ENCODE measurements at regions of chr17 and their contacts with region 1.

Region 1: DNA sequence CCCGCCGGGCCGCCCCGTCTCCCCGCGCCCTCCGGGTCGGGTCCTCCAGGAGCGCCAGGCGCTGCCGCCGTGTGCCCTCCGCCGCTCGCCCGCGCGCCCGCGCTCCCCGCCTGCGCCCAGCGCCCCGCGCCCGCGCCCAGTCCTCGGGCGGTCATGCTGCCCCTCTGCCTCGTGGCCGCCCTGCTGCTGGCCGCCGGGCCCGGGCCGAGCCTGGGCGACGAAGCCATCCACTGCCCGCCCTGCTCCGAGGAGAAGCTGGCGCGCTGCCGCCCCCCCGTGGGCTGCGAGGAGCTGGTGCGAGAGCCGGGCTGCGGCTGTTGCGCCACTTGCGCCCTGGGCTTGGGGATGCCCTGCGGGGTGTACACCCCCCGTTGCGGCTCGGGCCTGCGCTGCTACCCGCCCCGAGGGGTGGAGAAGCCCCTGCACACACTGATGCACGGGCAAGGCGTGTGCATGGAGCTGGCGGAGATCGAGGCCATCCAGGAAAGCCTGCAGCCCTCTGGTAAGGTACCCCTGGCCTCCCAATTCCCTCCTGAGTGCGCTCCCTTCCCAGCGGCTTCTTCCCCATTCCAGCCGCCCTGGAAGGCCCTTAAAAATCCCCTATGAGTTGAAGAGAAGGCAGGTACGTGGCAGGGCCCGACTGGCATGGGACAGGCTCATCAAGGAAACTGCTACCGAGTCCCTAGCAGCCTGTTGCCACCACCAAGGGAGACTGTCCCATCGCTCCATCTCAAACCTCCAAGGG is 505 bp downstream of the IGFBP4 start:
- DNase-seq: no peak
- H3K4me3 ChIP-seq: peak overlapping the region; percentile 59 to 90 (median 73)
- H3K27ac ChIP-seq: peak overlapping the region; percentile 89 to 99 (median 96)
- H3K4me1 ChIP-seq: peaks cover 36 to 73% (median 43%) of the 10 kb centered on the region in 3 donors
- H3K27me3 ChIP-seq: no peaks in the 10 kb centered on the region
- CTCF ChIP-seq: peak in 3 of 6 experiments; percentile 7 to 51 (median 21)
- POLR2A ChIP-seq: no peak

Region 2: DNA sequence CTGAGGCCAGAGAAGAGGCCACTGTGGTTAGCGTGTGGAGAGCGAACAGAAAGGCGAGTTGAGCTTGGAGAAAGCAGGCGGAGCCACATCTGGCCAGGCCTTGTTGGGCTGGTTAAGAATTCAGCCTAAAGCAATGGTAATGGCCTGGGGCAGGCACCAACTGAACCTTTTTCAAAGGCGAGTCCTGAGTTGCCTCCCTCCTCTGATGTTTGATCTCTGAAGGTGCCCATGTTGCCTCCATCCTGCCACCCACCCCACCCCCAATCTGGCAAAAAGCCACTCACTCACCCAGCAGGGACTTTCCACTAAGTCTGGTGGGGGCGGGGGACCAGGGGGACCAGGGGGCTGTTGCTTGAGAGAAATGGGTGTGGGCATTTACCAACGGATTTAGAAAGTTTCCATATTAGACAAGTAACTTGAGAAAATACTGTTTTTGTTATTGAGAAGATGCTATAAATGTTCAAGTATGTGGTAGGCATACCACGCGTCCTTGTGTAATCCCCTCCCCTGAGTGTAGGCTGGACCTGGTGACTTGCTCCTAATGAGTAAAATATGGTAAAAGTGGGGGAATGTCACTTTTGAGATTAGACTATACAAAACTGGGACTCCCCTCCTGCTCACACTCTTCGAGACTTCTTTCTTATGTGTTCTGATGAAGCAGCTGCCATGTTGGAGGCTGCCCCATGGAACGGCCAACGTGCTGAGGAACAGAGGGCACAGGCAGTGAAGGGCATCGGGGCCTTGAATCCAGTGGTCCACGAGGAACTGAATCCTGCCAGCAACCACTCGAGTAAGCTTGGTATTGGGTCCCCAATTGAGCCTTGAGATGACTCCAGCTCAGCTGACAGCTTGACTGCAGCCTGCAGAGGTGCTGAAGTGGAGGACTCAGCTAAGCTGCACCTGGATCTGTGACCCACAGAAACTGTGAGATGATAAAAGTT is 87.6 kb after region 1 on chr17:
- intact Hi-C with region 1: loop called (anchors 5 kb)
- DNase-seq: no peak
- H3K4me3 ChIP-seq: no peak overlapping the region
- H3K27ac ChIP-seq: peak overlapping the region; percentile 20 to 91 (median 82)
- H3K4me1 ChIP-seq: peaks cover 38 to 99% (median 51%) of the 10 kb centered on the region in 3 donors
- H3K27me3 ChIP-seq: no peaks in the 10 kb centered on the region
- CTCF ChIP-seq: no peak
- POLR2A ChIP-seq: no peak

Region 3: DNA sequence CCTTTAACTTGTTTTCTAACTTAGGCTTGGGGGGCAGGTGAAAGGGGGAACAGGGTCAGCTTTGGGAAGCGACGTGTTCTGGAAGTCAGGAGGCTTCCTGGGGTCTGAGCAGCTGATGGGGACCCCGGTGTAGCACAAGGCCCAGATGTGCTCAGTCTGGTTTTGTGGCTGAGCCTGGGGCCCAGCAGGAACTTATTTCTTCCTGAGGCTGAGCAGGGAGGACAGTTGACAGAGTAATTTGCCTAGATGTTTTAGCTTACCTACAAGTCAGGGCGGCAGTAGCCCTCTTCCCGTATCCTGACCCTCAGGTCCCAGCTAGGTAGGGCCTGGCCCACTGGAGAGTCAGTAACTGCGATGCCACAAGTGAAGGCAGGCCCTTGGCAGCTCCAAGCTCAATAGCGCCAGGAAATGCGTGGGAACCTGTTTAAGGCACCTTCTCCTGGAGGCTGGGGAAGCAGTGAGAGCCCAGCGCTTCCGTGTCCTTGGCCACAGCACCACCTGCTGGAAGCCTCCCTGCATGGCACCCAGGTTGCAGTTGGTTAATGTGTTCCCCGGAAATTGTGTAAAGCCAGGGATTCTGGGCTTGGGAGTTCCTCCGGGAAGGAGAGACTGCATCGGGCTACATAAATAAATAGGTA is 116.3 kb after region 1 on chr17:
- intact Hi-C with region 1: loop called (anchors 5 kb)
- DNase-seq: no peak
- H3K4me3 ChIP-seq: peak overlapping the region in 3 of 4 donors; percentile 15 to 48 (median 27)
- H3K27ac ChIP-seq: peak overlapping the region; percentile 65 to 84 (median 84)
- H3K4me1 ChIP-seq: peaks cover 25 to 95% (median 38%) of the 10 kb centered on the region in 3 donors
- H3K27me3 ChIP-seq: no peaks in the 10 kb centered on the region
- CTCF ChIP-seq: peak; percentile 96 to 100 (median 98)
- POLR2A ChIP-seq: no peak